ENCODE measurements at regions of chr17 and their contacts with region 1.

Region 1: DNA sequence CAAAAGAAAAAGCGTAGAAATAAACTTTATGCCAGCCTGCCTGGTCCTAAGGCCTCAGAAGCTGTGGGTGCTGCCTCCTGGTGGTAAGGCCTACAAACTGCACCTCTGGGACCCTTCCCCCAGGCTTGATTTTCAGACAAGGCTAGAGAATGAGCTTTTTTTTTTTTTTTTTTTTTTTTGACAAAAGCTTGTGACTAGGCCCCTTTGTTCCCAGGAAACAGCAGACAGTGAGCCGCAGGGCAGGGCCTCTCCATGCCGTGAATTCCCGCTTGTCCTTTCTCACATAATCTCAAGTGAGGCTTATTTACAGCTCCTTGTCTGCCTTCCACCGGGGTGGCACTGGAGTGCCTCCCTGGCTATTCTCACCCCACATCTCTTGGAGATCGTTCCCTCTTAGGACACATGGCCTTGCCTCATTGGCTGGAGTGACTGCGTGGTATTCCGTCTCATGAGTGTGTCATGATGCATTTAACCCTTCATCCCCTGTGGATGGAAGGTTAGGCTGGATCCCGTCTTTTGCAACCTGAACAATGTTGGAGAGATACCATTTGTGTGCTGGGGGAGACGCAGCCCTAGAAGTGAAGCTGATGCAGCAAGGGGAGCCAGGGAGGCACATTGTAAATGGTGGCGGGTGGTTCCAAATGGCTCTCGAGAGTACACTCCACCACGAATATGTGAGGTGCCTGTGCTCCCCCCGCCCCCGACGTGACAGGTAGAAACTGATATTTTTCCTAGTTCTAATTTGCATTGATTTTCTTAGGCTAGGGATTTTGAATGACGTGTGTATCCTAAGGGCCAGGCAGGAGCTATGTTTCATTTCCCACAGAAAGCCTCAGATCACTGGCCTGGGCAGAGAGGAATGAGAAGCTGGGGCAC is 49.6 kb downstream of the USP22 start:
- DNase-seq: peak; percentile 75

Region 2: GRCh38 chr17:20800146-20800545 is 193.1 kb before region 1 on chr17:
- intact Hi-C with region 1: loop called in 1 of 2 experiments (anchors 10 kb)
- DNase-seq: no peak

Region 3: GRCh38 chr17:20914658-20915057 is 78.6 kb before region 1 on chr17:
- intact Hi-C with region 1: loop called in 1 of 2 experiments (anchors 5 kb)
- DNase-seq: no peak